ENCODE measurements at regions of chr19 and their contacts with region 1.

Region 1: DNA sequence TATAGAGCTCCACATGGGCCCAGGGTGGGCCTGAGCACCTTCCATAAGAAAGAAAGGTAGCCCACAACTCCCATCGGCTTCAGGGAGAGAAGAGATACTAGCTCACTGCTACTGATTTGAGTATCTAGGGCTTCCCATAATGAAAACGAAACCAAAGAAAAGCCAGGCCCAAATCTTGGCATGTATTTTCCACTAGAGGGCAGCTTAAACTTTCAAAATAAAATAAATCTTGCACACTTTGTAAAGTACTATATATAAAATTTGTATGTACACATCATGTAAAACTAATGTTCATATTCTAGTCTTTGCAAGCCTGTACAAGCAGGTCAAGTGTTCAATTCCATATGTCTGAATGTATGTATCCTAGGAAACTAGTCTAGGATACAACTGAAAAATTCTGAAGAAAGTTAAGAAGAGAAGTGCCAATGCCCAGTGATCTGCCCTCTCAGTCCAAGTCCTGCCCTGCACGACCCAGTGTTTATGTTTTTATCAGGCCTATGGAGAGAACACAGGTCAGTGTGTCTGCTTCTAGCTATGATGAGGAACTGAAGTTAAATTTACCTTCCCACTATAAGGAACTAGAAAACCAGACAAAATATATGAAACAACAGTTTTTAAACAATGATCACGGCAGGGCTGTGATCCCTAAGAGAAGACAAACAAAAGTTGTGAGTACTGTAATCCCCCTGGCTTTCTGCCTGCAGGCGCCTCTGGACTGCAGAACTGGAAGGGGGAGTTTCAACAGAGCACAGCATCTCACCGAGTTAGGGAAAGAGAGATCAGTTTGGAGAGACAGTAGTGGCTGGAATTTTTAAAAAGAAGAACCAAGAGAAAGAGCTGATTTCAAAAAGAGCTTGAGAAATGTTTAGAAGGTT is 475.7 kb downstream of the UQCRFS1 start:
- DNase-seq: no peak
- H3K4me3 Mint-ChIP-seq: no peak overlapping the region
- H3K27ac Mint-ChIP-seq: no peak overlapping the region
- H3K4me1 Mint-ChIP-seq: peaks cover 4% of the 10 kb centered on the region
- H3K27me3 Mint-ChIP-seq: no peaks in the 10 kb centered on the region

Region 2: DNA sequence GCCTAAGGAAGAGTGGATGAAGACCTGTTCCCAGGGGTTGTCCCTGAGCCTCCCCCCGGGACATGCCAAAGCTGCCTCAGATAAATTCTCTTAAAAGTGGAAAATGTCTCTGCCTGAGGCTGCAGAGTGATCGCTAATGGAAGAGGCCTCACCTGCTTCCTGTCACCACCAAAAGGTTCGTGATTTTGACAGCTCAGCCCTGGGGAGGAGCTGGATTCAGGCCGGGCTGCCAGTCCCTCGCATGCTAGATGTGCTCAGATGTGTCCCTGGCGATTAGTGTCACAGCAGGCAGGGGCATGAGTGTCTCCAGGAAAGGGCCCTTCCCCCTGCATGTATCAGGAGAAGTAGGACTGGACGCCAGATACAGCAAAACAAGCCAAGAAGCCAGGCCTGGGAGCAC is 150.8 kb before region 1 on chr19:
- CTCF ChIA-PET with region 1: no interaction called
- DNase-seq: no peak
- H3K4me3 Mint-ChIP-seq: no peak overlapping the region
- H3K27ac Mint-ChIP-seq: no peak overlapping the region
- H3K4me1 Mint-ChIP-seq: no peaks in the 10 kb centered on the region
- H3K27me3 Mint-ChIP-seq: no peaks in the 10 kb centered on the region

Region 3: GRCh38 chr19:28823338-28823961 is 86.2 kb after region 1 on chr19:
- CTCF ChIA-PET with region 1: no interaction called
- DNase-seq: no peak
- H3K4me3 Mint-ChIP-seq: no peak overlapping the region
- H3K27ac Mint-ChIP-seq: no peak overlapping the region
- H3K4me1 Mint-ChIP-seq: no peaks in the 10 kb centered on the region
- H3K27me3 Mint-ChIP-seq: no peaks in the 10 kb centered on the region

Region 4: GRCh38 chr19:28878862-28879566 is 141.8 kb after region 1 on chr19:
- CTCF ChIA-PET with region 1: interaction called, 24 read pairs
- DNase-seq: peak; percentile 74
- H3K4me3 Mint-ChIP-seq: no peak overlapping the region
- H3K27ac Mint-ChIP-seq: no peak overlapping the region
- H3K4me1 Mint-ChIP-seq: no peaks in the 10 kb centered on the region
- H3K27me3 Mint-ChIP-seq: peaks cover 7% of the 10 kb centered on the region

Region 5: DNA sequence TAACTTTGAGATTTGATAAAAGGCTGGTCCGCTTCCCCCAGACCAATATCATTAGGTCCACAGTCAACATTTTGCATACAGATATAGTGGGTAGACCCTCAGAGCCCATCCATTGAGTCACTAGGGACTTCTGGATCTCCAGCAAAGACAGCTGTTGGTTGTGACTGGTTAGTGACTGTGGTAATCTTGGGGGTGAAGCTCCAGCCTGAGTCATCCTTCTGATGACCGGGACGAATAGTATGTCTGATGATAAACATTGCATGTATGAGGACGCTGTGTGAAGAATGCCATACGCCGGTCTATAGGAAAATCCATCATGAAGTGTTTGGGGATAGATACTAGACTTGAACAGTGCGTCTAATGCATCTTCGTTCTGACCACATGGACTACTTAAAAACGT is 168.7 kb after region 1 on chr19:
- CTCF ChIA-PET with region 1: no interaction called
- DNase-seq: no peak
- H3K4me3 Mint-ChIP-seq: no peak overlapping the region
- H3K27ac Mint-ChIP-seq: no peak overlapping the region
- H3K4me1 Mint-ChIP-seq: no peaks in the 10 kb centered on the region
- H3K27me3 Mint-ChIP-seq: no peaks in the 10 kb centered on the region